Aorta (tissue), 5 donors: ENCODE measurements at regions of chr3 and their contacts with region 1.

Region 1: GRCh38 chr3:184250167-184250828 is 826 bp downstream of the EEF1AKMT4 start:
- DNase-seq: peak; percentile 89 to 93
- ATAC-seq: peak; percentile 91
- H3K4me3 ChIP-seq: peak overlapping the region; percentile 49 to 70
- H3K27ac ChIP-seq: no peak overlapping the region
- H3K4me1 ChIP-seq: no peaks in the 10 kb centered on the region
- H3K27me3 ChIP-seq: no peaks in the 10 kb centered on the region

Region 2: GRCh38 chr3:183895296-183895695 is 355.0 kb before region 1 on chr3:
- intact Hi-C with region 1: loop called in 1 of 2 experiments (anchors 10 kb)
- DNase-seq: no peak
- ATAC-seq: peak; percentile 69
- H3K4me3 ChIP-seq: no peak overlapping the region
- H3K27ac ChIP-seq: no peak overlapping the region
- H3K4me1 ChIP-seq: no peaks in the 10 kb centered on the region
- H3K27me3 ChIP-seq: no peaks in the 10 kb centered on the region

Region 3: GRCh38 chr3:184154885-184155643 is 95.2 kb before region 1 on chr3 and contains the start of gene DVL3:
- intact Hi-C with region 1: loop called in 1 of 2 experiments (anchors 5 kb)
- DNase-seq: peak; percentile 81 to 91
- ATAC-seq: peak; percentile 85
- H3K4me3 ChIP-seq: peak within 1 kb of the TSS; percentile 65 to 82
- H3K27ac ChIP-seq: peak within 1 kb of the TSS; percentile 34 to 81
- H3K4me1 ChIP-seq: peaks cover 0 to 2% of the 10 kb centered on the region in 2 donors
- H3K27me3 ChIP-seq: no peaks in the 10 kb centered on the region
- total RNA-seq, gene DVL3: 66.7 to 77.1 TPM

Region 4: GRCh38 chr3:184185461-184186308 is 64.6 kb before region 1 on chr3 and contains the start of gene ABCF3:
- intact Hi-C with region 1: loop called in 1 of 2 experiments (anchors 2 kb)
- DNase-seq: peak; percentile 100
- ATAC-seq: peak; percentile 97
- H3K4me3 ChIP-seq: peak within 1 kb of the TSS; percentile 79 to 88
- H3K27ac ChIP-seq: peak within 1 kb of the TSS; percentile 50 to 77
- H3K4me1 ChIP-seq: no peaks in the 10 kb centered on the region
- H3K27me3 ChIP-seq: no peaks in the 10 kb centered on the region
- total RNA-seq, gene ABCF3: 44.1 to 57.1 TPM

Region 5: GRCh38 chr3:184298759-184299496 is 48.6 kb after region 1 on chr3 and contains the start of gene PSMD2:
- intact Hi-C with region 1: loop called in 1 of 2 experiments (anchors 5 kb)
- DNase-seq: peak; percentile 99
- ATAC-seq: peak; percentile 100
- H3K4me3 ChIP-seq: peak within 1 kb of the TSS; percentile 65 to 74
- H3K27ac ChIP-seq: peak within 1 kb of the TSS in 1 of 2 donors; percentile 83
- H3K4me1 ChIP-seq: peaks cover 0 to 1% of the 10 kb centered on the region in 2 donors
- H3K27me3 ChIP-seq: no peaks in the 10 kb centered on the region
- total RNA-seq, gene PSMD2: 139 to 143 TPM